Activated T-helper 1 cell treated with anti-CD3 and anti-CD28 coated beads, Interleukin-12 subunit alpha, Interleukin-12 subunit beta, Interleukin-2, Interleukin-4 antibody, amounts not matched to agents 30 ng/mL and 10 ng/mL and 1 ng/mL, durations not matched to agents 14 hours and 24 hours and 36 hours (primary cell): ENCODE measurements at regions of chr18 and their contacts with region 1.

Region 1: GRCh38 chr18:12947355-12948041 is at the start of gene SEH1L:
- DNase-seq: peak; percentile 96
- H3K4me3 Mint-ChIP-seq: peak within 1 kb of the TSS; percentile 98
- H3K27ac Mint-ChIP-seq: peak within 1 kb of the TSS; percentile 98
- H3K4me1 Mint-ChIP-seq: peaks cover 44% of the 10 kb centered on the region
- H3K27me3 Mint-ChIP-seq: peaks cover 2% of the 10 kb centered on the region
- total RNA-seq, gene SEH1L: 121 and 124 TPM in 2 replicates

Region 2: GRCh38 chr18:11980555-11981382 is 966.7 kb before region 1 on chr18:
- intact Hi-C with region 1: loop called (anchors 5 kb)
- DNase-seq: peak; percentile 96
- H3K4me3 Mint-ChIP-seq: peak overlapping the region; percentile 80
- H3K27ac Mint-ChIP-seq: peak overlapping the region; percentile 83
- H3K4me1 Mint-ChIP-seq: peaks cover 15% of the 10 kb centered on the region
- H3K27me3 Mint-ChIP-seq: peaks cover 12% of the 10 kb centered on the region

Region 3: GRCh38 chr18:12776821-12777471 is 170.6 kb before region 1 on chr18:
- intact Hi-C with region 1: loop called (anchors 1 kb)
- DNase-seq: no peak
- H3K4me3 Mint-ChIP-seq: no peak overlapping the region
- H3K27ac Mint-ChIP-seq: no peak overlapping the region
- H3K4me1 Mint-ChIP-seq: peaks cover 12% of the 10 kb centered on the region
- H3K27me3 Mint-ChIP-seq: no peaks in the 10 kb centered on the region

Region 4: DNA sequence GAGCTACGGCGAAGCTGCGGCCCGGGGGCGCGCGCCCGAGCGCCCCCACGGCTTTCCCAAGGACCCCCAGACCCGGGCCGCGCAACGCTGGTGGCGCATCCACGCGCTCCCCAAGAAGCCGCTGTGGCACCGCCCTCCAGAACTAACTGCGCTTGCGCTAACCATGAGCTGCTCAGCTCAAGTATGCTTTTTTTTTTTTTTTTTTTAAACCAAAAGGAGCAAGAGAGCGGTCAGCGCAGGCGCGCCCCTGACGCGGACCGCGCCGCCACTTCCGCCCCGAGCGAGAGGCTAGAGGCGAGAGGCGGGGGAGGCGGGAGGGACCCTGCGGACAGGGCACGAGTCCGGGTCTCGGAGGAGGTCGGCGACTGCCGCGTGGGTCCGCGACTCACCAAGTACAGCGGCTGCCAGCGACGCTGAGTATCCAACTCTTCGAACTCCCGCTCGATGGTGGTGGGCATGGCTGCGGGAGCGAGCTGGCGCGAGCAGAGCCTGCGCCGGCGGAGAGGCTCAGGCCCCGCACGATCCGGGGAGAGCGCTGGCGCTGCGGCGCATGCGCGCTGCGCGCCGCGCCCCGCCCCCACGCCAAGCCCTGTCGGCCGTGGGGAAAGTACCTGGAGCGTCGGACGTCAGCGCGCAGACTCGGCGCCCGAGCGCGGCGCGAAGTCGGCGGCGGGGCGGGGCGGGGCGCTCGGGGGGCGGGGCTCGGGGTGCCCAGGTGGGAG is 63.7 kb before region 1 on chr18 and contains the start of gene PTPN2:
- intact Hi-C with region 1: loop called (anchors 1 kb)
- DNase-seq: peak; percentile 89
- H3K4me3 Mint-ChIP-seq: peak within 1 kb of the TSS; percentile 92
- H3K27ac Mint-ChIP-seq: peak within 1 kb of the TSS; percentile 92
- H3K4me1 Mint-ChIP-seq: peaks cover 70% of the 10 kb centered on the region
- H3K27me3 Mint-ChIP-seq: no peaks in the 10 kb centered on the region
- total RNA-seq, gene PTPN2: 76.7 and 77.1 TPM in 2 replicates

Region 5: GRCh38 chr18:13137670-13138419 is 190.3 kb after region 1 on chr18:
- intact Hi-C with region 1: loop called (anchors 1 kb)
- DNase-seq: peak; percentile 76
- H3K4me3 Mint-ChIP-seq: peak overlapping the region; percentile 91
- H3K27ac Mint-ChIP-seq: peak overlapping the region; percentile 79
- H3K4me1 Mint-ChIP-seq: peaks cover 21% of the 10 kb centered on the region
- H3K27me3 Mint-ChIP-seq: peaks cover 11% of the 10 kb centered on the region

Region 6: GRCh38 chr18:13381944-13382365 is 434.5 kb after region 1 on chr18:
- intact Hi-C with region 1: loop called (anchors 5 kb)
- DNase-seq: peak; percentile 35
- H3K4me3 Mint-ChIP-seq: peak overlapping the region; percentile 79
- H3K27ac Mint-ChIP-seq: peak overlapping the region; percentile 98
- H3K4me1 Mint-ChIP-seq: peaks cover 53% of the 10 kb centered on the region
- H3K27me3 Mint-ChIP-seq: peaks cover 4% of the 10 kb centered on the region

Region 7: DNA sequence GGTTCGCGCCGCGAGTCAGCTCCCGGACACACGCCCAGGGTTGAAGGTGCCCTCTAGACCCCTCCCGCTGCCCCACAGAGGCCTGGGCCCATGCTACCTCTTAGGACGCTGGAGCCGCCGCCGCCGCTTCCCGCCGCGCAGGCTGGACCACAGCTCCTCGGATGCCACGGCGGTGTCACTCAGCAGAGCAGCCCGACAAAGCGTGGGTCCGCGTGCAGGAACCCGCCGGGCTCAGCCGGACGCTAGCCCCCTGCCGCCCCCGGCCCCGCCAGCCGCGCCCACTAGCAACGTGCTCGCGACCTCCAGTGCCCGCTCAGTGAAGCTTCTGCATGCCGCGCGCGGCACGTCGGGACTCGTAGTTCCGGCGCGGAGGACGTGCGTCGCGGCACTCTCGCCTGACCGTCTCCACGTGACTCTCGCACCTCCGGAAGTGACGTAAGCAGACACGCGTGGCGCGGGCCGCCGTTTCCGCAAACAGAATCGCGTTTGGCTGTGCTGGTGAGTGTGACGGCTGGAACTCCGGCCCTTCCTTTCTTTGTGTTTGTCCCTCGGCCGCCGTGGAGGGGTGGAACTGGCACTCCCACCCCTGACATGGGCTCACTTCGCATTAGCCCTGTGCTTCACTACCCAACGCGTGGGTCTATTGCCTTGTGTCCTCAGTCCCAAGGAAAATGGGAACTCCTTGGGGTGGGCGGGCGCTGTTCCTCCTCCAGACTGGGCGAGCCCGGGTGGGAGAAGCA is 778.9 kb after region 1 on chr18 and contains the starts of genes FAM210A and RNMT:
- intact Hi-C with region 1: loop called (anchors 2 kb)
- DNase-seq: peak; percentile 94
- H3K4me3 Mint-ChIP-seq: peak within 1 kb of the TSS; percentile 93
- H3K27ac Mint-ChIP-seq: peak within 1 kb of the TSS; percentile 86
- H3K4me1 Mint-ChIP-seq: peaks cover 72% of the 10 kb centered on the region
- H3K27me3 Mint-ChIP-seq: no peaks in the 10 kb centered on the region
- total RNA-seq, gene FAM210A: 27.7 and 29.5 TPM in 2 replicates
- total RNA-seq, gene RNMT: 55.8 and 60.6 TPM in 2 replicates